ENCODE measurements at regions of chr17 and their contacts with region 1.

Region 1: DNA sequence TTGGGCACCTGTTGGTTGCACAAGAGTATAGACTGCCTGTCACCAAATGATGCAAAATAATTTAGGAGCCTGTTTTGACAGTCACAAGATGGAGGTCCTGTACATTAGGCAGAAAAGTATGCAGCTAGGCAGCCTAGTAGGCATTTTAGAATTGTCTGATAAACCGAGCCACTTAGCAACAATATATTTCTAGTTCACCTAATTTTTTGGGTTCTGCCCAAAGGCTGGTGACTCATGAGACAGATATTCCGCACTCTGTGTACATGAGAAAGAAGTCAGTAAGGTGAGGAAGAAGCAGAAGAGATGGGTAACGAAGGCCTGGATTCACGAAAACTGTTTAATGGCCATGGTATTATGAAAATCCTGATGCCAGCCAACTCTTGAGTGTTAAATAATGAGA is 7.2 kb downstream of the ACACA start:
- DNase-seq: no peak
- H3K4me3 ChIP-seq: no peak overlapping the region
- H3K27ac ChIP-seq: no peak overlapping the region
- H3K4me1 ChIP-seq: no peaks in the 10 kb centered on the region
- H3K27me3 ChIP-seq: no peaks in the 10 kb centered on the region
- CTCF ChIP-seq: no peak

Region 2: DNA sequence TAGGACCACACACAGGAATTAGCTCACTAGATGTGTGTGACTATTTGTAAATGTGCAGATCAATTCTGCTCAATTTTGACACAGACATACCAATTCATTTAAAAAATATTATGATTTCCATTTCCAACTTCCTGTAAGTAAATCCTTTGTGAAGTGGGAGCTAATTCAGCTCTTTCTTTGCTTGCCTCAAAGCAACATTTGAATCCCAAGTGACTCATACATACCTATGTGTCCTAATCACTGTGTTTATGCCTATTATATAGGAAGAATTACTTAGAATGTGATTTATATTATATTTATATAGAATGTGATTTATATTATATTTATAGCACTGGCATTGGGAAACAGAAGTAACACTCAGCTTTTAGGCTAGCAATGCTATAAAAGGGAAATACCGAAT is 219.5 kb before region 1 on chr17:
- CTCF ChIA-PET with region 1: no interaction called
- POLR2A ChIA-PET with region 1: no interaction called
- intact Hi-C with region 1: no loop called
- DNase-seq: no peak
- H3K4me3 ChIP-seq: no peak overlapping the region
- H3K27ac ChIP-seq: no peak overlapping the region
- H3K4me1 ChIP-seq: no peaks in the 10 kb centered on the region
- H3K27me3 ChIP-seq: no peaks in the 10 kb centered on the region
- CTCF ChIP-seq: no peak

Region 3: GRCh38 chr17:37373530-37374159 is 25.8 kb before region 1 on chr17:
- CTCF ChIA-PET with region 1: interaction called, 11 read pairs
- POLR2A ChIA-PET with region 1: no interaction called
- intact Hi-C with region 1: no loop called
- DNase-seq: peak; percentile 72
- H3K4me3 ChIP-seq: no peak overlapping the region
- H3K27ac ChIP-seq: no peak overlapping the region
- H3K4me1 ChIP-seq: no peaks in the 10 kb centered on the region
- H3K27me3 ChIP-seq: no peaks in the 10 kb centered on the region
- CTCF ChIP-seq: peak; percentile 89

Region 4: GRCh38 chr17:37417852-37418251 is 18.4 kb after region 1 on chr17:
- CTCF ChIA-PET with region 1: no interaction called
- POLR2A ChIA-PET with region 1: no interaction called
- intact Hi-C with region 1: no loop called
- DNase-seq: no peak
- H3K4me3 ChIP-seq: no peak overlapping the region
- H3K27ac ChIP-seq: no peak overlapping the region
- H3K4me1 ChIP-seq: no peaks in the 10 kb centered on the region
- H3K27me3 ChIP-seq: no peaks in the 10 kb centered on the region
- CTCF ChIP-seq: no peak

Measured in A673 (cell line).